Activated naive CD4-positive, alpha-beta T cell treated with anti-CD3 and anti-CD28 coated beads for 36 hours (primary cell): ENCODE measurements at regions of chr21 and their contacts with region 1.

Region 1: DNA sequence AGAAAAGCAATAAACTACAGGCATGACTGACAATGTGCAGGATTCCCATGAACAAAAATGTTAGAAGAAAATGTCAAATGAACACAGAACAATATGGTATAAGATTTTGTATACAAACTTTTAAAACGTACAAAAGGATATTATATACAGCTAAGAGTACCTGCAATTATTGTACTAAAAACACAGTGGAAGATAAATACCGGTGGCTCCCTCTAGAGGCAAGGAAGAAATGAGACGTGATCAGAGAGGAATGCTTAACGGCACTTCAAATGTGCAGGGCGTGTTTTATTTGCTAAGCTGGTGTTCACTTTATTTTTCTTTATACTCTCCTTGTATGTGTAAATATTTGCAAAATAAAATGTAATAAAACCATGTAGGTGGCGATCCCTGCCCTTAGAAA is 191.8 kb upstream of the SAMSN1 start:
- DNase-seq: peak; percentile 62
- H3K4me3 Mint-ChIP-seq: no peak overlapping the region
- H3K27ac Mint-ChIP-seq: no peak overlapping the region
- H3K4me1 Mint-ChIP-seq: peaks cover 31% of the 10 kb centered on the region
- H3K27me3 Mint-ChIP-seq: no peaks in the 10 kb centered on the region

Region 2: GRCh38 chr21:14259747-14260146 is 478.2 kb before region 1 on chr21:
- CTCF ChIA-PET with region 1: no interaction called
- intact Hi-C with region 1: loop called (anchors 1 kb)
- DNase-seq: no peak
- H3K4me3 Mint-ChIP-seq: no peak overlapping the region
- H3K27ac Mint-ChIP-seq: no peak overlapping the region
- H3K4me1 Mint-ChIP-seq: peaks cover 8% of the 10 kb centered on the region
- H3K27me3 Mint-ChIP-seq: no peaks in the 10 kb centered on the region

Region 3: GRCh38 chr21:14454016-14455009 is 283.6 kb before region 1 on chr21:
- CTCF ChIA-PET with region 1: interaction called, 4 read pairs
- intact Hi-C with region 1: loop called (anchors 1 kb)
- DNase-seq: no peak
- H3K4me3 Mint-ChIP-seq: no peak overlapping the region
- H3K27ac Mint-ChIP-seq: peak overlapping the region; percentile 88
- H3K4me1 Mint-ChIP-seq: peaks cover 48% of the 10 kb centered on the region
- H3K27me3 Mint-ChIP-seq: peaks cover 2% of the 10 kb centered on the region

Region 4: DNA sequence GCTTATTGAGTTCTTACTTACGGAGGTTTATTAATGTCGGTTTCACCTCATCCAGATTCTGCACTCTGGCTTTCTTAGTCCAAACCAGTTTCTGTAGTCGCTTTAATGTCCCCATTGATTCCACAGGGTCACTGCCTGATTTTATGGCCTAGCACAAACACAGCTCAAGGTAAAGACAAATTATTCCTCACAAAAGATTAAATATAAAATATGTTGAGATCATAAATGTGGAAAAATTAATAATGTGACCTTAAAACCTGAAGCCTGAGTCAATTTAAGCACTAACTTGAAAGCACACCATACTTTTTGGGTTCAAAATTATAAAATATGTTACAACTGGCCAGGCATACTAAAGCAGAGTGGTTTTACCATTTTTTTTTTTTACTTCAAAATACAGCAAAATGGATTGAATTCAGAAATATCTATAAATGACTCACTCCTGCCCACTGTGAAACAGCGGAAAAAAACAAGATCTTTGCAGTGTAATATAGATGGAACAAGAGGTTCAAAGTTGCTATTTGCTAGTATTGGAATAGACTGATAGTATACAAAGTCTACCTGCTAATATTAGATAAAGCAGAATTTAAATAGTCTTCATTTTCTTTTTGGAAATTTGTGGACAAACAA is 154.2 kb before region 1 on chr21:
- CTCF ChIA-PET with region 1: no interaction called
- intact Hi-C with region 1: no loop called
- DNase-seq: no peak
- H3K4me3 Mint-ChIP-seq: no peak overlapping the region
- H3K27ac Mint-ChIP-seq: no peak overlapping the region
- H3K4me1 Mint-ChIP-seq: peaks cover 13% of the 10 kb centered on the region
- H3K27me3 Mint-ChIP-seq: no peaks in the 10 kb centered on the region

Region 5: GRCh38 chr21:14620152-14620551 is 117.8 kb before region 1 on chr21:
- CTCF ChIA-PET with region 1: interaction called, 3 read pairs
- intact Hi-C with region 1: loop called (anchors 5 kb)
- DNase-seq: peak; percentile 30
- H3K4me3 Mint-ChIP-seq: no peak overlapping the region
- H3K27ac Mint-ChIP-seq: peak overlapping the region; percentile 25
- H3K4me1 Mint-ChIP-seq: peaks cover 27% of the 10 kb centered on the region
- H3K27me3 Mint-ChIP-seq: no peaks in the 10 kb centered on the region

Region 6: DNA sequence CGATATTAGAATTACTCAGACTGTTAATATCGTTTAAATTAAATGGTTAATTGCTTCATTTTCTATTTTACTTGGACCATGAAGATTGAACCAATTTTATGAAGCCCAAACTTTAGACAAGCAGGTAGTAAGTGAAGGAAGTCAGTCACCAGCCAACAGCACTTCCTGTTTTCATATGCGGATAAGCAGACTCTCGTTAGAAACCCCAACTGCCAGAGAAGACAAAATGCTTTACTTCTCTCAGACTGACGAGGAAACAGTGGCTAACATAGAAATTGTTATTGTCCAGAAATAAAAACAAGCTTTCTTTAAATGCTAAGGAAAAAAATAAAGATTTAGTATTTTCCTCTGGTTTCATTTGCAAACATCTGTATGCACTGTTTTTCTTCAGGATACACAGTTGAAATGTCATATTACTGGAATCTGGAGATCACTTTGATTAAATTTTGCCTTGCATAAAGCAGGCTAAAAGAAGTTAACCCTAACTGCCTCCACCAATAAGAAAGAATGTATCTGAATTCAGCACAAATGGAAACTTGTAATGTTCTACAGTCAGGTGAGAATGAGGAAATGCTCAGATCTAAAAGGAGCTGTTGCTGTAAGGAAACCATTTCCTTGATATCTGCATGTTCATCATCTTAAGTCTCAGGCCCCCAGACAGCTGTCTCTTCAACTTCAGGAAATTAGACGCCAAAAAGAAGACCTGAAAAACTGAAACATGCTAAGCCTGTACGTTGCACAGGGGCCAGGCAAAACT is 62.0 kb before region 1 on chr21:
- CTCF ChIA-PET with region 1: interaction called, 3 read pairs
- intact Hi-C with region 1: loop called (anchors 2 kb)
- DNase-seq: peak; percentile 28
- H3K4me3 Mint-ChIP-seq: peak overlapping the region; percentile 63
- H3K27ac Mint-ChIP-seq: peak overlapping the region; percentile 91
- H3K4me1 Mint-ChIP-seq: peaks cover 40% of the 10 kb centered on the region
- H3K27me3 Mint-ChIP-seq: no peaks in the 10 kb centered on the region

Region 7: GRCh38 chr21:14773777-14774345 is 35.9 kb after region 1 on chr21:
- CTCF ChIA-PET with region 1: interaction called, 5 read pairs
- intact Hi-C with region 1: loop called (anchors 1 kb)
- DNase-seq: peak; percentile 79
- H3K4me3 Mint-ChIP-seq: no peak overlapping the region
- H3K27ac Mint-ChIP-seq: no peak overlapping the region
- H3K4me1 Mint-ChIP-seq: no peaks in the 10 kb centered on the region
- H3K27me3 Mint-ChIP-seq: peaks cover 2% of the 10 kb centered on the region

Region 8: DNA sequence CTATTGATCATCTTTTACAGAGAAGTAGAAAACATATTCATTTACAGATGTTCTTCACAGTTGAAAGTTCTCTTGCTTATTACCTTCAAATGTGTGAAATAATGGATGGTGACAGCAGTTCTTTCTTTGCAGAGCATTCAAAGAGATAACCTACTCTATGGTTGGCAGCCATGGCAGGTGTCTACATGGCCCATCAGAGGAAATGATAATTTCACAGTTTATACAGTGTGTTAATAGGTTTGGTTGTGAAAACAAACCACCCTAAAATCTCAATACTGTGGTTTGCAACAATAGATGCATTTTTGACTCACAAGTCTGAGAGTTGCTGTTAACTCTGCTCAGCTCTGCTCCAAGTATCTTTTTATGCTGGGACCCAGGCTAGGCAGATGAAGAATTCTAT is 49.4 kb after region 1 on chr21:
- CTCF ChIA-PET with region 1: no interaction called
- intact Hi-C with region 1: no loop called
- DNase-seq: no peak
- H3K4me3 Mint-ChIP-seq: no peak overlapping the region
- H3K27ac Mint-ChIP-seq: no peak overlapping the region
- H3K4me1 Mint-ChIP-seq: no peaks in the 10 kb centered on the region
- H3K27me3 Mint-ChIP-seq: no peaks in the 10 kb centered on the region